Ascending aorta (tissue), 2 donors: ENCODE measurements at regions of chr5 and their contacts with region 1.

Region 1: DNA sequence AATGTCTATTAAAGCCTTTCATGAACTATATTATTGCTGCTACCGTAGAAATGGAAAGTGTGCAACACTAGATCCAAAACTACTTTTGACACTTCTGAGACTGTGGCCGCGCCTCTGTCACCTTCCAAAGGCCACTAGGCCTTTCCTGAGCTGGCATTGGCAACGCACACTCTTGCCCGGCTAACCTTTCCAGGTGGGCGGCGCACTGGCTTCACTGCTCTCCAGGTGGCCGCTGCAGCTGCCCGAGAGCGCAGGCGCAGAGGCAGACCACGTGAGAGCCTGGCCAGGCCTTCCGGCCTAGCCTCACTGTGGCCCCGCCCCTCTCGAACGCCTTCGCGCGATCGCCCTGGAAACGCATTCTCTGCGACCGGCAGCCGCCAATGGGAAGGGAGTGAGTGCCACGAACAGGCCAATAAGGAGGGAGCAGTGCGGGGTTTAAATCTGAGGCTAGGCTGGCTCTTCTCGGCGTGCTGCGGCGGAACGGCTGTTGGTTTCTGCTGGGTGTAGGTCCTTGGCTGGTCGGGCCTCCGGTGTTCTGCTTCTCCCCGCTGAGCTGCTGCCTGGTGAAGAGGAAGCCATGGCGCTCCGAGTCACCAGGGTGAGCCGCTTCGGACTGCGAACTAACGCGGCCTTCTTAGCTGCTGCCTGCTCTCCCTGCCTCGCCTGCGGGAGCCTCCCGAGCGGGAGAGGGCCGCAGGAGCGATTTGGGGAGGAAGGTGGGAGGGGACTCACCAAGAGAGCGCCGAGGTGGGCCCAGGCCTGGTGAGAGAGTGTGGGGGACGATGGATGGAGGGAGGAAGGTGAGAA is at the start of gene CCNB1:
- DNase-seq: peak; percentile 90 to 98
- H3K4me3 ChIP-seq: peak within 1 kb of the TSS; percentile 58 to 77
- H3K27ac ChIP-seq: peak within 1 kb of the TSS in 1 of 2 donors; percentile 34
- H3K4me1 ChIP-seq: peaks cover 0 to 8% of the 10 kb centered on the region in 2 donors
- H3K27me3 ChIP-seq: no peaks in the 10 kb centered on the region
- CTCF ChIP-seq: no peak
- total RNA-seq, gene CCNB1: 16.0 TPM

Region 2: DNA sequence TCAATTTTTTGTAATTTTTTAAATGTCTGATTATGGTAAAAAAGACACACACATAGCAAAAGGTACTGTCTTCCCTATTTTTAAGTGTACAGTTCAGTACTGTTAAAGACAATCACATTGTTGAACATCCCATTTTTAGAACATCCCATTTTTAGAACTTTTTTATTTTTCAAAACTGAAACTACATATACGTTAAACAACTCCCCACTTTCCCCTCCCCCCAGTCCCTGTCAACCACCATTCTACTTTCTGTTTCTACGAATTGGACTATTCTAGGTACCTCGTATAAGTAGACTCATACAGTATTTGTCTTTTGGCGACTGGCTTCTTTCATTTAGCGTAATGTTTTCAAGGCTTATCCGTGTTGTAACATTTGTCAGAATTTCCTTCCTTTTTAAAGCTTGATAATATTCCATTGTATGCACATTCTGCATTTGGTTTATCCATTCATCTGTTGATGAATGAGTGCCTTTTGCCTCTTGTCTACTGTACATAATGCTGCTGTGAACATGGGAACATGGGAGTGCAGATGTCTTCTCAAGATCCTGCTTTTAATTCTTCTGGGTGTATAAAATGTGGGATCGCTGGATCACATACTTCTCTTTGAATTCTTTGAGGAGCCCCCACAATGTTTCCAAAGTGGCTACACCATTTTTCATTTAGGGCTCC is 797.3 kb before region 1 on chr5:
- intact Hi-C with region 1: no loop called
- DNase-seq: no peak
- H3K4me3 ChIP-seq: no peak overlapping the region
- H3K27ac ChIP-seq: no peak overlapping the region
- H3K4me1 ChIP-seq: peaks cover 0 to under 1% of the 10 kb centered on the region in 2 donors
- H3K27me3 ChIP-seq: no peaks in the 10 kb centered on the region
- CTCF ChIP-seq: no peak

Region 3: GRCh38 chr5:69083412-69083811 is 83.5 kb before region 1 on chr5:
- intact Hi-C with region 1: no loop called
- DNase-seq: no peak
- H3K4me3 ChIP-seq: no peak overlapping the region
- H3K27ac ChIP-seq: no peak overlapping the region
- H3K4me1 ChIP-seq: no peaks in the 10 kb centered on the region
- H3K27me3 ChIP-seq: no peaks in the 10 kb centered on the region
- CTCF ChIP-seq: no peak

Region 4: DNA sequence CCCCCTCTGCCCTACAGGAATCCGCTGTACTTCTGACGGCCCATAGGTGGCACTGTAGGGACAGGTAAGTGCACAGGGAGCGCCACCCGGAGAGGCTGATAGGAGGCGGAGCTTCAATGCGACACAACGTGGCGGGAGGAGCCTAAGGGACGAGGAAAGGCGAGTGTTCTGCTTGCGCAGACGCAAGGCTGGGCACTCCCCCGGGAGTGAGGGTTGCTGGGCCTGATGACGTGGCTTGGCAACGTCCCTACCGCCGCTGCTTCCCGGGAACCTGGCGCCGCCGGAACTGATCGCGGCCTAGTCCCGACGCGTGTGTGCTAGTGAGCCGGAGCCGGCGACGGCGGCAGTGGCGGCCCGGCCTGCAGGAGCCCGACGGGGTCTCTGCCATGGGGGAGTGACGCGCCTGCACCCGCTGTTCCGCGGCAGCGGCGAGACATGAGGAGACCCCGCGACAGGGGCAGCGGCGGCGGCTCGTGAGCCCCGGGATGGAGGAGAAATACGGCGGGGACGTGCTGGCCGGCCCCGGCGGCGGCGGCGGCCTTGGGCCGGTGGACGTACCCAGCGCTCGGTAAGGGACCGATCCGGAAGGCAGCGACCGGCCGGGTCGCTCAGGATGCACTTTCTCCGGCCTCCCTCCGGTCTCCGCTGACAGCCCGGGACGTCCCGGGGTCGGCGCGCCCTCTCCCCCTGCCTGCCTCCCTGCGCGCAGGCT is 73.0 kb before region 1 on chr5 and contains the start of gene SLC30A5:
- intact Hi-C with region 1: loop called (anchors 2 kb)
- DNase-seq: peak; percentile 99 to 100
- H3K4me3 ChIP-seq: peak within 1 kb of the TSS; percentile 86 to 93
- H3K27ac ChIP-seq: peak within 1 kb of the TSS; percentile 91 to 94
- H3K4me1 ChIP-seq: peaks cover 0 to 12% of the 10 kb centered on the region in 2 donors
- H3K27me3 ChIP-seq: no peaks in the 10 kb centered on the region
- CTCF ChIP-seq: peak; percentile 90 to 92 (median 90)
- total RNA-seq, gene SLC30A5: 20.6 TPM

Region 5: GRCh38 chr5:69189162-69190086 is 22.5 kb after region 1 on chr5 and contains the start of gene CENPH:
- intact Hi-C with region 1: loop called (anchors 1 kb)
- DNase-seq: peak; percentile 52 to 93
- H3K4me3 ChIP-seq: peak within 1 kb of the TSS; percentile 82 to 85
- H3K27ac ChIP-seq: peak within 1 kb of the TSS; percentile 75
- H3K4me1 ChIP-seq: peaks cover 0 to 4% of the 10 kb centered on the region in 2 donors
- H3K27me3 ChIP-seq: no peaks in the 10 kb centered on the region
- CTCF ChIP-seq: no peak
- total RNA-seq, gene CENPH: not detected

Region 6: GRCh38 chr5:69217548-69218526 is 50.9 kb after region 1 on chr5:
- intact Hi-C with region 1: loop called (anchors 1 kb)
- DNase-seq: peak; percentile 91 to 99
- H3K4me3 ChIP-seq: peak overlapping the region; percentile 84 to 86
- H3K27ac ChIP-seq: peak overlapping the region; percentile 88 to 91
- H3K4me1 ChIP-seq: peaks cover 0 to 6% of the 10 kb centered on the region in 2 donors
- H3K27me3 ChIP-seq: no peaks in the 10 kb centered on the region
- CTCF ChIP-seq: peak; percentile 23 to 26 (median 25)

Region 7: DNA sequence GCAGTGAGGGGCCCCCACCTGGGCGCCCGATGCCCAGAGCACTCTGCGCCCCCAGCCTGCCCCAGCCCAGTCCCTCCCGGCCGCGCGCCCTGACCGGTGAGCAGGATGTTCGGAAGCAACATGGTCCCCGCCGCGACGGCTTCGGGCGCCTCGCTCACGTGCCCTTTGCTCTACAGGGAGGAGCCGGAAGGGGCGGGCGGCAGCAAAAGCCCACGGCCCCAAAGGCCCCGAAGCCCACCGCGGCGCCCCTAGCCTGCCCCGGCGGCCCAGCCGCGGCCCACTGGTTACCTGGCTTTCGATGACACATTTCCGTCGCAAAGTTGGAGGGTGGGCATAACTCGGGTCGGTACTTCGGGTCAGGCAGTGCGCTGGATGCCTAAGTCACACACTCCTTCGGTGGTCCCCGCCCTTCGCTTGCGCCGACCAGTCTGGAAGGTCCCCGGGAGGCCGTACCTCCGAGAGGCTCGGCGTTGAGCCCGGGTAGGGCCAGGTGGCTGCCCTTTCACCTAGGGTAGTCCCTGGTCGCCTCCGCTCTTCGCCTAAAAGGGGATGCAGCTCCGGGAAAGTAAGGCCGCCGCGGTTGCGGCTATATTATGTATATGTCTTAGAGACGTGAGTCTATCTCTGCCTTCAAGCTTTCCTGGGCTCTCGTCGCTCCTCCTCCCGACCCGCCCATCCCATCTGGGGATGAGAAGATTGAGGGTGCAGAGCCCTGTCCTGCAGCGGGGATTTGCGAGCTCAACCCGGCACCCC is 202.7 kb after region 1 on chr5 and contains the starts of genes AK6, RAD17 and TAF9:
- intact Hi-C with region 1: loop called (anchors 2 kb)
- DNase-seq: peak; percentile 73 to 94
- H3K4me3 ChIP-seq: peak within 1 kb of the TSS; percentile 70 to 81
- H3K27ac ChIP-seq: peak within 1 kb of the TSS; percentile 90 to 94
- H3K4me1 ChIP-seq: peaks cover 7 to 18% of the 10 kb centered on the region in 2 donors
- H3K27me3 ChIP-seq: no peaks in the 10 kb centered on the region
- CTCF ChIP-seq: no peak
- total RNA-seq, gene AK6: 3.9 TPM
- total RNA-seq, gene RAD17: 24.4 TPM
- total RNA-seq, gene TAF9: 6.3 TPM

Region 8: DNA sequence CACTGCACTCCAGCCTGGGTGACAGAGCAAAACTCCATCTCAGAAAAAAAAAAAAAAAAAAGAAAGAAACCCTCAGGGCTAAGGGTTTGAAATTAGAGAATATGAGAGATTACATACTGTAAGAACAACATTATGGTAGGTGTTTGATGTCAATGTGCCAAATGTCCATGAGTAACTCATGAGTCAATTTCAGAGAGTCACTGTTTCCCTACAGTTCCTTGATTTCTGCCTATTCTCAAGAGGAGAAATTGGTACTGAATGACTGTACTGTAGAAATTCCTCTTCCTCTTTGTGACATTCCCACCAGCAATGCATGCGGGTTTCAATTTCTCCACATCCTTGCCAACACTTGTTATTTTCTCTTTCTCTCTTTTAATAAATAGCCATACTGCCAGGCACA is 283.2 kb after region 1 on chr5:
- intact Hi-C with region 1: no loop called
- DNase-seq: no peak
- H3K4me3 ChIP-seq: no peak overlapping the region
- H3K27ac ChIP-seq: no peak overlapping the region
- H3K4me1 ChIP-seq: no peaks in the 10 kb centered on the region
- H3K27me3 ChIP-seq: no peaks in the 10 kb centered on the region
- CTCF ChIP-seq: no peak